ENCODE measurements at regions of chr15 and their contacts with region 1.

Region 1: DNA sequence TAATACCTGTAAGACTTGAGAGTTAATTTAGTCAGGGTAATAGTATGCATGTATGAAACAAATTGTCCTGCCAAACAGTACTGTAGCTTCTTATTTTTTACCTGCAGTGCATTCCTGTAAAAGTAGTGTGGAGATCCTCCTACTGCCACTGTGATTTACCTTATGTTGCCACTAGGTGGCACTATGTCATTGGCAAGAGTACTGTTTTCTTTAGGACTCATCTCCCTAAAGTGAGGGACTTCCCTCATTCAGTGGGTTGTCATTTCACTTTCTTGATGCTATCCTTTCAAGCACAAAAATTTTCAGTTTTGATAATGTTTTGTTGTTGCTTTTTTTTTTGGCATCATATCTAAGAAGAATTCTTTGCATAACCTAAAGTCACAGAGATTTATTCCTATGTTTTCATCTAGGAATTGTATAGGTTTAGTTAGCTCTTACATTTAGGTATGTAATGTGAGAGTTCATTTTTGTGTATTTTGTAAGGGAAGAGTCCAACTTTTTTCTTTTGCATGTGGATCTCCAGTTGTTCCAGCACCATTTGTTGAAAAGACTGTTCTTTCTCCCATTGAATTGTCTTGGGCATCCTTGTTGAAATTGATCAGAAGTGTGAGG is 105.7 kb downstream of the AKAP13 start:
- DNase-seq: peak; percentile 79
- H3K4me3 ChIP-seq: no peak overlapping the region
- H3K27ac ChIP-seq: no peak overlapping the region
- H3K4me1 ChIP-seq: peaks cover 24% of the 10 kb centered on the region
- H3K27me3 ChIP-seq: no peaks in the 10 kb centered on the region
- CTCF ChIP-seq: peak; percentile 61 to 78

Region 2: GRCh38 chr15:85330901-85331588 is 155.0 kb before region 1 on chr15:
- CTCF ChIA-PET with region 1: no interaction called
- dilution Hi-C with region 1: no loop called
- in situ Hi-C with region 1: loop called in 1 of 2 experiments (anchors 10 kb)
- intact Hi-C with region 1: loop called (anchors 1 kb)
- DNase-seq: peak; percentile 93
- H3K4me3 ChIP-seq: no peak overlapping the region
- H3K27ac ChIP-seq: peak overlapping the region; percentile 61
- H3K4me1 ChIP-seq: peaks cover 20% of the 10 kb centered on the region
- H3K27me3 ChIP-seq: no peaks in the 10 kb centered on the region
- CTCF ChIP-seq: peak; percentile 96 to 100

Region 3: DNA sequence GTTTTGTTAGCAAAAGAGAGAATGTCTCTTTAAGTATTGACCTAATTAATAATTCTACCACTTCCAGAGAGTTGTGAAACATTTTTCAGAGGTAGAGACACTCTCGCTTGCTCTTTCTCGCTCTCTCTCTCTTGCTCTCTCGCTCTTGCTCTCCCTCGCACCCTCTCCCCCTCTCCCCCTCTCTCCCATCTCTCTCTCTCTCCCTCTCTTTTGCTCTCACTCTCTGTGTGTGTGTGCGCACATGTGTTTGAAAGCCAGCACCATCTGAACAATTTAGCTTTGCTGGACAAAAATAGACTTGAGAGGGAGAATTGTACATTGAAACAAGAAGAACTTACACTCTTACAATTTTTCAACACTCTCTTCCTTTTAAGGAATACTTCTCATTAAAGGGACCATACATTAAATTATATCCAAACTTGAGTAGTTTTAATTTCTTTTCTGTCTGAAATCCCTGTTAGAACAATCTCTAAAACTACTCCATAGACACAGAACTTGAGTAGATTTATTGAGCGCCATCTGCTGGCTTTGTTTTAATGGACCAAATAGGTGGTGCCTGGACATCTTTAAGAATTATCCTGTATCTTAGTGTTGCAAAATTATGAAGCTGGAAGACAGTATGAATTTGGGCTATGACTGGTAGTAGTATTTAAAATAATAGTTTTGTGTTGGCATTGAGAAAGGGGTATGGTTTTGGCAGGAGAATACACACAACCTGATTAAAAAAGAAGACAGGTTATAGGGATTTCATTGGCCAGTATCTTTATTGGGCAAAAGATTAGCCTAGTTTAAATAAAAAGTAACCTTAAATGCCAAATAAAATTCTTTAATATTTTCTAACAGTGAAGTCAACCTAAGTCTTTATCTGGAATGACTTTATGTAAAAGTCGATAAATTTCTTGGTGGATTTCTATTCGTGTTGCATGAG is 19.0 kb after region 1 on chr15:
- CTCF ChIA-PET with region 1: interaction called, 6 read pairs
- dilution Hi-C with region 1: no loop called
- in situ Hi-C with region 1: no loop called
- intact Hi-C with region 1: loop called (anchors 1 kb)
- DNase-seq: peak; percentile 52
- H3K4me3 ChIP-seq: no peak overlapping the region
- H3K27ac ChIP-seq: no peak overlapping the region
- H3K4me1 ChIP-seq: no peaks in the 10 kb centered on the region
- H3K27me3 ChIP-seq: no peaks in the 10 kb centered on the region
- CTCF ChIP-seq: peak; percentile 52 to 59

Region 4: DNA sequence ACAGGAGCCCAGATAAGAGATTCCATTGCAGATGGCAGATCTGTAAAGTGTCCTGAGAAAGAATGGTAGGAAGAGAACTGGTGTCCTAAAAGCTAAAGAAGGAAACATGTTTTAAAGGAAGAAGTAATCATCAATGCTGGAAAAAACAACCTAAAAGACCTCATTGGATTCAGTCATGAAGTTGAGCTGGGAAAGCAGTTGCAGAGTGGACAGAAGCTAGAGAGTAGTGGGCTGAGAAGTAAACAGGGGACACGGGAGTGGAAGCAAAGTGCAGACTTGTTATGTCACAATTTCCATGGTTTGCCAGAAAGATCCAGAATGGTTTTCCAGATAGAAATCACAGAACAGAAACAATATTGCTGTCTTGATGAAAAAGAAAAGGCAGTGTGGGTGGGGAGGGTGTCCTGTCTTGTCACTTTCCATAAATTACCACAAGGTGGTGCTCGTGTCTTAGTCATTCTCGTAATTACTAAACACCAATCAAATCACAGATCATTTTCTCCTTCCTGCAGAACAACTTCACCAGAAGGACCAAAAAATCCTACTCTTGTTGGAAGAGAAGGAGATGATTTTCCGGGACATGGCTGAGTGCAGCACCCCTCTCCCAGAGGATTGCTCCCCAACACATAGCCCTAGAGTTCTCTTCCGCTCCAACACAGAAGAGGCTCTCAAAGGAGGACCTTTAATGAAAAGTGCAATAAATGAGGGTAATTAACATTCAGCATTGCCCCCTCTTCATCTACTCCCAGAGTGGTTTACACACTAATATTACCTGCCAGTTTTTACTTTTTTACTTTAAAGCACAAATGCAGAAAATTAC is 244.1 kb after region 1 on chr15:
- CTCF ChIA-PET with region 1: interaction called, 3 read pairs
- dilution Hi-C with region 1: no loop called
- in situ Hi-C with region 1: no loop called
- intact Hi-C with region 1: loop called (anchors 5 kb)
- DNase-seq: peak; percentile 53
- H3K4me3 ChIP-seq: no peak overlapping the region
- H3K27ac ChIP-seq: no peak overlapping the region
- H3K4me1 ChIP-seq: peaks cover 6% of the 10 kb centered on the region
- H3K27me3 ChIP-seq: no peaks in the 10 kb centered on the region
- CTCF ChIP-seq: peak; percentile 62 to 78

Measured in mammary epithelial cell (primary cell).